CD8-positive, alpha-beta T cell (primary cell): ENCODE measurements at regions of chr16 and their contacts with region 1.

Region 1: GRCh38 chr16:30065143-30065850 is at the start of gene ALDOA:
- DNase-seq: peak; percentile 82 to 97 (median 94)
- ATAC-seq: peak; percentile 82
- H3K4me3 ChIP-seq: peak within 1 kb of the TSS; percentile 94 to 99
- H3K4me3 Mint-ChIP-seq: peak within 1 kb of the TSS; percentile 98
- H3K27ac ChIP-seq: peak within 1 kb of the TSS; percentile 87 to 94
- H3K27ac Mint-ChIP-seq: peak within 1 kb of the TSS; percentile 98
- H3K4me1 ChIP-seq: peaks cover 48% of the 10 kb centered on the region
- H3K4me1 Mint-ChIP-seq: peaks cover 43% of the 10 kb centered on the region
- H3K27me3 ChIP-seq: no peaks in the 10 kb centered on the region
- H3K27me3 Mint-ChIP-seq: no peaks in the 10 kb centered on the region
- CTCF ChIP-seq: no peak
- total RNA-seq, gene ALDOA: 339 to 359 TPM

Region 2: GRCh38 chr16:30025156-30025555 is 40.1 kb before region 1 on chr16:
- CTCF ChIA-PET with region 1: no interaction called
- POLR2A ChIA-PET with region 1: no interaction called
- intact Hi-C with region 1: no loop called
- DNase-seq: no peak
- ATAC-seq: no peak
- H3K4me3 ChIP-seq: no peak overlapping the region
- H3K4me3 Mint-ChIP-seq: no peak overlapping the region
- H3K27ac ChIP-seq: no peak overlapping the region
- H3K27ac Mint-ChIP-seq: no peak overlapping the region
- H3K4me1 ChIP-seq: peaks cover 7% of the 10 kb centered on the region
- H3K4me1 Mint-ChIP-seq: peaks cover 9% of the 10 kb centered on the region
- H3K27me3 ChIP-seq: peaks cover 11 to 20% of the 10 kb centered on the region in 2 experiments
- H3K27me3 Mint-ChIP-seq: peaks cover 37% of the 10 kb centered on the region
- CTCF ChIP-seq: no peak

Region 3: GRCh38 chr16:30052671-30053372 is 12.5 kb before region 1 on chr16:
- CTCF ChIA-PET with region 1: interaction called, 6 read pairs
- POLR2A ChIA-PET with region 1: interaction called, 19 read pairs
- intact Hi-C with region 1: loop called in 1 of 2 experiments (anchors 1 kb)
- DNase-seq: peak; percentile 69 to 93 (median 90)
- ATAC-seq: peak; percentile 86
- H3K4me3 ChIP-seq: peak overlapping the region; percentile 55 to 74
- H3K4me3 Mint-ChIP-seq: peak overlapping the region; percentile 84
- H3K27ac ChIP-seq: no peak overlapping the region
- H3K27ac Mint-ChIP-seq: no peak overlapping the region
- H3K4me1 ChIP-seq: peaks cover 6% of the 10 kb centered on the region
- H3K4me1 Mint-ChIP-seq: peaks cover 17% of the 10 kb centered on the region
- H3K27me3 ChIP-seq: no peaks in the 10 kb centered on the region
- H3K27me3 Mint-ChIP-seq: no peaks in the 10 kb centered on the region
- CTCF ChIP-seq: no peak

Region 4: GRCh38 chr16:30091474-30092372 is 26.4 kb after region 1 on chr16 and contains the start of gene TBX6:
- CTCF ChIA-PET with region 1: interaction called, 9 read pairs
- POLR2A ChIA-PET with region 1: interaction called, 34 read pairs
- intact Hi-C with region 1: loop called (anchors 1 kb)
- DNase-seq: peak; percentile 86 to 97 (median 92)
- ATAC-seq: peak; percentile 82
- H3K4me3 ChIP-seq: peak within 1 kb of the TSS; percentile 59 to 69
- H3K4me3 Mint-ChIP-seq: peak within 1 kb of the TSS; percentile 87
- H3K27ac ChIP-seq: peak within 1 kb of the TSS; percentile 58 to 69
- H3K27ac Mint-ChIP-seq: peak within 1 kb of the TSS; percentile 91
- H3K4me1 ChIP-seq: peaks cover 55% of the 10 kb centered on the region
- H3K4me1 Mint-ChIP-seq: peaks cover 48% of the 10 kb centered on the region
- H3K27me3 ChIP-seq: no peaks in the 10 kb centered on the region
- H3K27me3 Mint-ChIP-seq: no peaks in the 10 kb centered on the region
- CTCF ChIP-seq: peak; percentile 73
- total RNA-seq, gene TBX6: 0.16 to 0.22 TPM

Region 5: DNA sequence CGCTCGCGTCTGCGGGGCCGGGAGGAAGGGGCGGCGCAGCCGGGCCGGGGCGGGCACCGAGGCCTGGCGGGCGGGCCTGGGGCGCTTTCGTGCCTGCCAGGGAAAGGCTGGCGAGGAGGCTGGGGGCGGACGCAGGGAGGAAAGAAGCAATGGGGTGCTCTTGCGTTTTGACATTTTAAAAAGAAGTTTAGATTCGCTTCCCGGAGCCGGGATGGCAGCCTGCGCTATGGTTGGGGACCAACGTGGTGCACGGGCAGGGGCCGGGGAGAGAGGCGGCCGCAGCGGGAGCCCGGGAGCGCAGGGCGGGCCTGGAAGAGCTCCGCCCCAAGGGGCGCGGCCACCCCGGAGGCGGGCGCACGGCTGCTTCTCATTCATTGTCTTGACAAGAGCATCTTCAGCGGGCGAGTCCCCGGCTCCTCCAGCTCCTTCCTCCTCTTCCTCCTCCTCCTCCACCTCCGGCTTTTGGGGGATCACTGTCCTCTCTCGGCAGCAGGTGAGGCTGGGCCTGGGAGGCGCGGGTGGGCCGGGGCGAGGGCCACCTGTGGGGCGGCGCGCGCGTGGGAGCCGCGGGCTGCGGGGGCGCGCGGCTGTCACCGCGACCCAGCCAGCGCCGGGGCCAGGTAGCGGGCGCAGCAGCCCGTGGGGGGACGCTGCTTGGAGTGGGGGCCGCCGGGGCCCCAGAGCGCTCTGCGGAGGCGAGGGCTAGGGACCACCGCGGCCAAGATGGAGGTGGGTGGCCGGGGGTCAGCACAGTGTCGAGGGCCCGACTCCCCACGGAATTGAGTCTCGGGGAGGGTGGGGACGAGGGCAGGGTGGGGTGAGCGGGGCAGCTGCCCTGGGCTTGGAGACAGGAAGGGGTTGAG is 118.2 kb after region 1 on chr16 and contains the start of gene CORO1A:
- CTCF ChIA-PET with region 1: interaction called, 4 read pairs
- POLR2A ChIA-PET with region 1: interaction called, 36 read pairs
- intact Hi-C with region 1: no loop called
- DNase-seq: peak; percentile 58 to 94 (median 84)
- ATAC-seq: peak; percentile 41
- H3K4me3 ChIP-seq: peak within 1 kb of the TSS; percentile 97 to 99
- H3K4me3 Mint-ChIP-seq: peak within 1 kb of the TSS; percentile 95
- H3K27ac ChIP-seq: peak within 1 kb of the TSS; percentile 80 to 91
- H3K27ac Mint-ChIP-seq: peak within 1 kb of the TSS; percentile 96
- H3K4me1 ChIP-seq: peaks cover 34% of the 10 kb centered on the region
- H3K4me1 Mint-ChIP-seq: peaks cover 39% of the 10 kb centered on the region
- H3K27me3 ChIP-seq: no peaks in the 10 kb centered on the region
- H3K27me3 Mint-ChIP-seq: no peaks in the 10 kb centered on the region
- CTCF ChIP-seq: no peak
- total RNA-seq, gene CORO1A: 352 to 364 TPM